ENCODE measurements at regions of chr16 and their contacts with region 1.

Region 1: DNA sequence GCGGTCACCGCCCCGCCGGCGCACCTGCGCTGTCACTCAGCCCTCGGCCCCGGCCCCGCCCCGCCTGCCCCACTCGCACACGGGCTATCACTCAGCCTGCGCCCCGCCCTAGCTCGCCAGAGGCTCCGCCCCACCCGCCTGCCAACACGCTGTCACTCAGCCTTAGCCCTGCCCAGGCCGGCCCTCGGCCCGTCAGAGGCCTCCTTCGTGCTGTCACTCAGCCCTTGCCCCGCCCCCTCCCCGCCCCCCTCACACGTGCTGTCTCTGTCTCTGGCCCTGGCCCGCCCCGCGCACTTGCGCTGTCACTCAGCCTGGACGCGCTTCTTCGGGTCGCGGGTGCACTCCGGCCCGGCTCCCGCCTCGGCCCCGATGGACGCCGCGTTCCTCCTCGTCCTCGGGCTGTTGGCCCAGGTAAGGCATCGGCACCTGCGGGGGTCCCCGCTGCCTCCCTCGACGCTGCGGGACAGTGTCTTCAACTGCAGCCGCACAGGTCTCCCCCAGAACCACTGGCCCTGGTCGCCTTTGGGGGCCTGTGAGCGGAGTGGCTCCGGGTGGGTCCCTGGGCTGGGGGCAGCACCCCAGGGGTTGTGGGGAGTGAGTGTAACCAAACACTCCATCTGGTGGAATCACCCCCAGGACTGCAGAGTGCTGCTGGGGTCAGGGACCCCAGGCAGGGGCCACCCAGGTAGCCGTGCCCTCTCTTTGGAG is at the start of gene CDH15:
- DNase-seq: peak; percentile 95 to 99 (median 97)
- ATAC-seq: peak; percentile 89 to 94 (median 92)
- H3K4me3 ChIP-seq: peak within 1 kb of the TSS in 2 of 4 donors; percentile 17 to 39
- H3K27ac ChIP-seq: no peak within 1 kb of the TSS
- H3K4me1 ChIP-seq: peaks cover 0 to 7% (median 4%) of the 10 kb centered on the region in 3 donors
- H3K27me3 ChIP-seq: peaks cover 0 to 5% (median 0%) of the 10 kb centered on the region in 4 donors
- CTCF ChIP-seq: no peak
- total RNA-seq, gene CDH15: 0.09 to 2.5 (median 1.1) TPM in 5 of 6 donors, not detected in the other

Region 2: GRCh38 chr16:88737298-88738150 is 434.1 kb before region 1 on chr16:
- intact Hi-C with region 1: loop called in 1 of 3 experiments (anchors 10 kb)
- DNase-seq: peak; percentile 58 to 95 (median 80)
- ATAC-seq: peak; percentile 83 to 93 (median 90)
- H3K4me3 ChIP-seq: no peak overlapping the region
- H3K27ac ChIP-seq: no peak overlapping the region
- H3K4me1 ChIP-seq: no peaks in the 10 kb centered on the region
- H3K27me3 ChIP-seq: no peaks in the 10 kb centered on the region
- CTCF ChIP-seq: peak; percentile 98 to 99 (median 99)

Region 3: GRCh38 chr16:88811769-88812512 is 359.7 kb before region 1 on chr16 and contains the start of gene APRT:
- intact Hi-C with region 1: loop called in 1 of 3 experiments (anchors 10 kb)
- DNase-seq: peak; percentile 93 to 100 (median 98)
- ATAC-seq: peak; percentile 90 to 95 (median 92)
- H3K4me3 ChIP-seq: peak within 1 kb of the TSS; percentile 73 to 100 (median 86)
- H3K27ac ChIP-seq: peak within 1 kb of the TSS; percentile 85 to 95 (median 88)
- H3K4me1 ChIP-seq: peaks cover 0 to 12% (median 11%) of the 10 kb centered on the region in 3 donors
- H3K27me3 ChIP-seq: no peaks in the 10 kb centered on the region
- CTCF ChIP-seq: no peak
- total RNA-seq, gene APRT: 38.8 to 85.4 (median 61.6) TPM

Region 4: DNA sequence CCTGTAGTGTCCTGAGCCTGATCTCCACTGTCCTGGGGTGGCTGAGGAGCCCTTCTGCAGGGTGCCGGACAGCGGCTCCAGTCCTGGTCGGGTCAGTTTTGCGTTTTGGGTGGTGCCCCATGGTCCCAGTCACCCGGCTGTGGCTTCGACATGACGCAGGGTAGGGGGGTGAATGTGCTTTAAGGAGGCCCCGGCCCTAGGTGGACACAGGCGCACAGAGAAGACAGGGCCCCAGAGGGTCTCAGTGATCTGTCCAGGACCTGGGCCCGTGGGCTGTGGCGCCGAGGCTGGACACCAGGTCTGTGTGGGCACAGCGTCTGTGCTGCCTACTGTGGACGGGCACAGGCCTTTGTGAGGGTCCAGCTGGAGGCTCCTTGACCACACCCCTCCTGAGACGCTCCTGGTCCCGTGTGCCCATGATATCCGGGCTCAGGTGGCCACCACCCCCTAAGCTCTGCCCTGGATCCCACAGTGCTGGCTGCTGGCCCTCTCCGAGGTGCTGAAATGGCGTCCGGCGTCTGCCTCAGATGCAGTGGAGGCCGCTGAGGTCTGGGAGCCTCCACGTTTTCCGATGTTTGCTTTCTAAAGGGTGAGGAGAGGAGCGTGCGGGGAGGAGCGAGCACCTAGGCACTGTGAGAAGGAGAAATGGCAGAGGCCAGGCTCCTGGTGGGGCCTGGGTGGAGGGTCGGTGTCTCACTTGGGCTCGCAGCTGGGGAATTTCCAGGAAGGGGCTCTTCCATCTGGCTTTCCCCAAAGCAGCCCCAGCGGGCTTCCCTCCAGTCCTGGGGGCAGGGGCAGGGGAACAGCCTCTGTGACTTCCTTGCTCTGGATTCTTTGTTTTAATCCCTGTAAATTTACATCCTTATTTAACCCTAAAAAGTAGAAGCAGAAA is 134.1 kb before region 1 on chr16:
- intact Hi-C with region 1: no loop called
- DNase-seq: peak in 3 of 6 donors; percentile 21 to 61 (median 42)
- ATAC-seq: peak in 3 of 4 donors; percentile 65 to 81 (median 67)
- H3K4me3 ChIP-seq: no peak overlapping the region
- H3K27ac ChIP-seq: no peak overlapping the region
- H3K4me1 ChIP-seq: no peaks in the 10 kb centered on the region
- H3K27me3 ChIP-seq: no peaks in the 10 kb centered on the region
- CTCF ChIP-seq: no peak

Region 5: GRCh38 chr16:89574681-89575246 is 403.1 kb after region 1 on chr16:
- intact Hi-C with region 1: no loop called
- DNase-seq: peak in 3 of 6 donors; percentile 31 to 85 (median 59)
- ATAC-seq: peak; percentile 70 to 87 (median 82)
- H3K4me3 ChIP-seq: peak overlapping the region in 2 of 4 donors; percentile 13 to 33
- H3K27ac ChIP-seq: no peak overlapping the region
- H3K4me1 ChIP-seq: peaks cover 0 to 7% (median 0%) of the 10 kb centered on the region in 3 donors
- H3K27me3 ChIP-seq: peaks cover 0 to 4% (median 0%) of the 10 kb centered on the region in 4 donors
- CTCF ChIP-seq: peak; percentile 21 to 50 (median 44)